ENCODE measurements at regions of chr21 and their contacts with region 1.

Region 1: DNA sequence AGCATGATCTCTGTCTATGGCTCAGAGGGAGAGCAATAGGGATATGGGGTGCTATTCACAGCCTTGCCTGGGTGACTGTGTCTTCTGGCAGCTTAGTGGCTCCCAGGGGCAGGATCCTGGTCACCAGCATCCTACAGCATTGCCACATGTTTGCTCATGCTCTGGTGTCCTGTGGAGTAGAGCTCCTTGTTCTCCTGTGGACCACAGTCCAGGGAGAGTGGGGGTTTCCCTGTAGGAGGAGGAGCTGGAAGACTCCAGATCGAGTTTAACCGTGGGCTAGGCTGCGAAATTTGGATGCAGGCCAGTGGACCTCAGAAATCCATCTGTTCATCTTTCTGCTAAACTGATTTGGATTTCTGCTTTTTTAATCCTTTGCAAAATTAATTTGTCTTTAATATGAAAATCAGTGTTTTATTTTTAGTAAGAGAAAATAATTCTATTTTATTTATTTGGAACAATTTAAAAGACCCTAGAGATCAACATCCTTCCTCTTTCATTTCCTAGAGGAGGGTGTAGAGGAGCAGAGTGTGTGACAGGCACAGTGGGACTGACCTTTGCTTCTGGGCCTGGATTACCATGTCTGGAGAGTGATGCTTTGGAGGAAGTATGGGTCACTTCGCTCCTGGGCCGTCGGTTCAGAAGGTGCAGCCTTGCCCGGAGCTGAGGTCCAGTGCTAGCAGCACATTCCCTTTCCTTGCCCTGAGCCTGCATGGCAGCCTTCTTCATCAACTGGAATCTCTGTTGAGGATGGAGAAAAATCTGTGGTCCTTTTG is 17.4 kb downstream of the ADARB1 start:
- DNase-seq: no peak

Region 2: GRCh38 chr21:45055861-45056260 is 35.9 kb before region 1 on chr21:
- intact Hi-C with region 1: loop called (anchors 2 kb)
- DNase-seq: no peak

Region 3: GRCh38 chr21:45074048-45074817 is 17.5 kb before region 1 on chr21 and contains the start of gene ADARB1:
- intact Hi-C with region 1: loop called (anchors 2 kb)
- DNase-seq: peak; percentile 85
- total RNA-seq, gene ADARB1: 13.7 TPM